ENCODE measurements at regions of chr19 and their contacts with region 1.

Region 1: DNA sequence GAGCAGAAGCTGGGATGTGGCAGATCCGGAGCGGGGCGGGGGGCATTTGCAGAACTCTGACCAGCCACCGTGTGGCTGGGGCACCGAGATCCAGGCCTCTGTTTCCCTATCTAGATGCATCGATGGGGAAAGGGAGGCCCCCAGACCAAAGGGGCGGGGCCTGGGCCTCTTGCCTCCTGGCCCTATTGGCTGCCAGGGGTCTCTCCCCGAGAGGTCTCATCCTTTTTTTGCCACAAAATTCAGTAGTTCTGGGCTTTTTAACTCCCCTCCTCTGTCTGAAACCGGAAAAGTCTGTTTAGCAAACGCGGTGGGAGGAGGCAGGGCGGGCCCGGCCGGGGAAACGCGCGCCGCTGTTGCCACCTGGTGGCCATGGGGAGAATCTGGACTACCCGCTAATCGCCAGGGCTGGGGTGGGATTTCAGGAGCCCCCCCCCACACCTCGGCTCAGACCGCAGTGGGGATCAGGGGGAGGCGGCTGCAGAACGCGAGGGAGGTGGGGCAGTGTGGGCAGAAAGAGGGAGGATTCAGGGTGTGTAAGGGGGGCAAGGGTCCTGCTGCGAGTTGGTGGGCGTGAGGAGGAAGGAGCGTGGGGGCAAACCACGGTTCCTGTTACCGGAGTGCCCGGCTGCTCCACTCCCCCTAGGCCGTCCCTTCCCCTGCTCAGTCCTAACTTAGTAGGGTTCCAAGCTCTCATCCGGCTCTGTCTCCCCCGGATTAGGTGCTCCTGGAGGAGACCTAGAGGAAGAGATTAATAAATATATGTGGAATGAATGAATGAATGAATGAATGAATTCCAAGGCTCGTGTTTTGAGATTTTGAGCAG is 28.3 kb downstream of the IL12RB1 start:
- DNase-seq: peak; percentile 86
- H3K4me3 Mint-ChIP-seq: peak overlapping the region; percentile 15
- H3K27ac Mint-ChIP-seq: peak overlapping the region; percentile 79
- H3K4me1 Mint-ChIP-seq: peaks cover 19% of the 10 kb centered on the region
- H3K27me3 Mint-ChIP-seq: no peaks in the 10 kb centered on the region

Region 2: GRCh38 chr19:17944301-17944700 is 114.1 kb before region 1 on chr19:
- CTCF ChIA-PET with region 1: no interaction called
- DNase-seq: no peak
- H3K4me3 Mint-ChIP-seq: no peak overlapping the region
- H3K27ac Mint-ChIP-seq: no peak overlapping the region
- H3K4me1 Mint-ChIP-seq: peaks cover 25% of the 10 kb centered on the region
- H3K27me3 Mint-ChIP-seq: peaks cover 14% of the 10 kb centered on the region

Region 3: GRCh38 chr19:18007044-18007916 is 51.1 kb before region 1 on chr19:
- CTCF ChIA-PET with region 1: interaction called, 58 read pairs
- DNase-seq: peak; percentile 83
- H3K4me3 Mint-ChIP-seq: peak overlapping the region; percentile 83
- H3K27ac Mint-ChIP-seq: peak overlapping the region; percentile 95
- H3K4me1 Mint-ChIP-seq: peaks cover 54% of the 10 kb centered on the region
- H3K27me3 Mint-ChIP-seq: peaks cover 3% of the 10 kb centered on the region

Region 4: DNA sequence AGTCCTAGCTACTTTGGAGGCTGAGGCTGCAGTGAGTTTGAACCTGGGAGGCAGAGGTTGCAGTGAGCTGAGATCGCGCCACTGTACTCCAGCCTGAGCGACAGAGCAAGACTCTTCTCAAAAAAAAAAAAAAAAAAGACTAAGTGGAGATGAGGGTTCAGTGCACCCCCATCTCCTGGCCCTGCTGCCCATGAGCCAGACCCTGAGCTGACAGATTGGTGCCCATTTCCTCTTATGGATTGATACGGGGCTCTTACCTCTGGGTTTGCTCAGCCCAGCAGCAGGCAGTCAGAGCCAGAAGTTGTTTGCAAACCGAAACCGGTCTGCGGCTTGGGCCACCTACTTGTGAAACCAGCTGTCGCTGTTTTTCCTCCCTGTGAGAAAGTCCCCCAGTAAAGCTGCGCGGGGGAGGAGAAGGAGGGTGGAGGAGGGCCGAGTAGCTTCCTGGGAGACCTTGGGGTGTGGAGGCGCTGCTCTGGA is 13.6 kb before region 1 on chr19:
- CTCF ChIA-PET with region 1: interaction called, 34 read pairs
- DNase-seq: peak; percentile 95
- H3K4me3 Mint-ChIP-seq: peak overlapping the region; percentile 63
- H3K27ac Mint-ChIP-seq: peak overlapping the region; percentile 91
- H3K4me1 Mint-ChIP-seq: peaks cover 42% of the 10 kb centered on the region
- H3K27me3 Mint-ChIP-seq: peaks cover 59% of the 10 kb centered on the region

Region 5: GRCh38 chr19:18157465-18158063 is 99.1 kb after region 1 on chr19:
- CTCF ChIA-PET with region 1: no interaction called
- DNase-seq: no peak
- H3K4me3 Mint-ChIP-seq: no peak overlapping the region
- H3K27ac Mint-ChIP-seq: no peak overlapping the region
- H3K4me1 Mint-ChIP-seq: peaks cover 24% of the 10 kb centered on the region
- H3K27me3 Mint-ChIP-seq: no peaks in the 10 kb centered on the region